ENCODE measurements at regions of chr6 and their contacts with region 1.

Region 1: DNA sequence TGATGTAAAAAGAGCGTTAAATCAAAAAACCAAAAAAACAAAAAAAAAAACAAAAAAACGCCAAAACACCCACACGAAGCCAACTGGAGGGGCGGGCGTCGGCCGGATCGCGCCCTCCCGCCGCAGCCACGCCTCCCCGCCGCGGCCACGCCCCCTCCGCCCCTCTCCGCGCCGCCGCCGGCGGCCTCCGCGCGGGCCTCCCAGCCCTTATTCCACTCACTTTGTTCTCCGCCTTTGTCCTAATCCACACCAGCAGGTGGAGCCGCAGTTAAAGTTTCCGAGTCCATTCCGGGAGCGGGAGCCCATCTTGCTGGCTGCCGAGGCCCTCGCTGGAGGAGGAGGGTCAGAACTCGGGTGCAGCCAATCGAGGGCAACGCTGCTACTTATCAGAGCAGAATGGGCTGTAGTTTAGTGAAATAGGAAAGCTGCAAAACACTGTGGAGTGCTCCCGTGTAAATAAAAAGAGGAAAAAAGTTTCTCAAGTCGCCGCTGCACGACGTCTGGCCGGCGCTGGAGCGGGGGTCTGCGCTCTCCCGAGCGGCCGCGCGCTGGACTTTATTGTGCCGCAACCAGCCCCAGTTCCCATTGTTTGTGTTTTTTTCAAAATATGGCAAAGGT is at the start of gene ASF1A:
- DNase-seq: peak; percentile 97
- H3K4me3 Mint-ChIP-seq: peak within 1 kb of the TSS; percentile 79
- H3K27ac Mint-ChIP-seq: peak within 1 kb of the TSS; percentile 95
- H3K4me1 Mint-ChIP-seq: peaks cover 51% of the 10 kb centered on the region
- H3K27me3 Mint-ChIP-seq: no peaks in the 10 kb centered on the region
- total RNA-seq, gene ASF1A: 55.7 to 59.8 TPM

Region 2: DNA sequence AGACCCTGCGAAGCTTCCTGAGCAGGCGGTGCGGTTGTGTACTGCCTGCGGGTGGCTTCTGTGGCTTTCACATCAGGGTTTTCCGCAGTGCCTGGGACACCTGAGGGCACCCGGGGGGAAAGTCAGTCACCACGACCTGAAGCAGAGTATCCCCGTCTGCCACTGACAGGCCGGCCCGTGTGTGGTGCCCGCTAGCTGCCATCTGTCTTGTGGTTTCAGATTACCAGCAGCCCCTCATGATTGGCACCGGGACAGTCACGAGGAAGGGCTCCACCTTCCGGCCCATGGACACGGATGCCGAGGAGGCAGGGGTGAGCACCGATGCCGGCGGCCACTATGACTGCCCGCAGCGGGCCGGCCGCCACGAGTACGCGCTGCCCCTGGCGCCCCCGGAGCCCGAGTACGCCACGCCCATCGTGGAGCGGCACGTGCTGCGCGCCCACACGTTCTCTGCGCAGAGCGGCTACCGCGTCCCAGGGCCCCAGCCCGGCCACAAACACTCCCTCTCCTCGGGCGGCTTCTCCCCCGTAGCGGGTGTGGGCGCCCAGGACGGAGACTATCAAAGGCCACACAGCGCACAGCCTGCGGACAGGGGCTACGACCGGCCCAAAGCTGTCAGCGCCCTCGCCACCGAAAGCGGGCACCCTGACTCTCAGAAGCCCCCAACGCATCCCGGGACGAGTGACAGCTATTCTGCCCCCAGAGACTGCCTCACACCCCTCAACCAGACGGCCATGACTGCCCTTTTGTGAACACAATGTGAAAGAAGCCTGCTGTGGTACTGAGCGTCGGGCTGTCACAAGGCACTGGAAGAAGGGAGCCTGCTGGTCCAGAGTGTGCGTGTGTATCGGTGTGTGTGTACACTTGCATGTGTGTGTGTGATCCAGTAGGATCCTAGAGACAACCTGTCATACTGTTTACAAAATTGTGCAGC is 1346.0 kb before region 1 on chr6:
- CTCF ChIA-PET with region 1: no interaction called
- POLR2A ChIA-PET with region 1: interaction called, 10 read pairs
- DNase-seq: peak; percentile 58
- H3K4me3 Mint-ChIP-seq: peak overlapping the region; percentile 75
- H3K27ac Mint-ChIP-seq: peak overlapping the region; percentile 94
- H3K4me1 Mint-ChIP-seq: peaks cover 44% of the 10 kb centered on the region
- H3K27me3 Mint-ChIP-seq: no peaks in the 10 kb centered on the region

Region 3: GRCh38 chr6:118800394-118801071 is 93.4 kb before region 1 on chr6:
- CTCF ChIA-PET with region 1: interaction called, 18 read pairs
- POLR2A ChIA-PET with region 1: interaction called, 20 read pairs
- DNase-seq: peak; percentile 87
- H3K4me3 Mint-ChIP-seq: peak overlapping the region; percentile 14
- H3K27ac Mint-ChIP-seq: peak overlapping the region; percentile 77
- H3K4me1 Mint-ChIP-seq: peaks cover 44% of the 10 kb centered on the region
- H3K27me3 Mint-ChIP-seq: no peaks in the 10 kb centered on the region

Region 4: GRCh38 chr6:118843685-118844390 is 50.1 kb before region 1 on chr6:
- CTCF ChIA-PET with region 1: interaction called, 15 read pairs
- POLR2A ChIA-PET with region 1: interaction called, 36 read pairs
- DNase-seq: no peak
- H3K4me3 Mint-ChIP-seq: no peak overlapping the region
- H3K27ac Mint-ChIP-seq: peak overlapping the region; percentile 37
- H3K4me1 Mint-ChIP-seq: peaks cover 25% of the 10 kb centered on the region
- H3K27me3 Mint-ChIP-seq: no peaks in the 10 kb centered on the region

Region 5: DNA sequence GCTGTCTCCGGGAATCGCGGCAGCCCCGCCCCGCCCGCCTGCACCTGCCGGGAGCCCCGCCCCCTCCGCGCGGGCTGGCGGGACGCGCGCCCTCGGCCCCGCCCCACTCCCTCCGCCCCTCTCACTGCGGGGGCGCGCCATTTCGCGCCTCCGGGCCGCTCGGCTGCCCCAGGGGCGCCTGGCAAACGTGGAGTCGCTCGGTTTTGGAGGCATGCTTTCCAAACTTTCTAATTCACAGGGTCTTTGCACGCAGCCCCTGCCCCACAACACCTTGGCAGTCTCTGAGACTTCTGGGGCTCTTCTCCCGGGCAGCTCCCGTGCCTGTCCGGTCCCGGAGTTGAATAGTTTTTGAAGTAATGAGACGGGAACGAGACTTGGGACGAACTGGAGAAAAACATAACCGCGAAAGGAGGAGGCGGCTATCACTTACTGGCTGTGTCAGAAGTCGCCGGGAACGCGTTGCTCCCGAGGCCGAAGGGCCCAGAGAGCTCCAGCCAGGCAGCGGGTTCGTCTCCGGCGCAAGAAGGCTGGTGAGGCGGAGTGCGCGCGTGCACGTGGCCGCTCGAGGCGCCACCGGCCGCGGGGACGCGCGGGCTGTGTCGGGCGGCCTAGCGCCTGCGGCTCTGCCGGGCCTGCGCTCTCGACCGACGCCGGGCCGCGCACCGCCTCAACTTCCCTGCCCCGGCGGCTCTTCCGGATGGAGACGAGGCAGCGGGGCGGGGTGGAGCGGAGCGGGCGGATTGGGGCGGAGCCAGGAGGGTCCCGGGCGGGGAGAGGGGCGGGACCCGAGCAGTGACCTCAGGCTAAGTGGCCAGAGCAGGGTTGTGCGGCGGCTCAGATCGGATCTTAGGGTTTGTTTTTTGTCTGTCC is 40.8 kb after region 1 on chr6 and contains the start of gene MCM9:
- CTCF ChIA-PET with region 1: interaction called, 4 read pairs
- POLR2A ChIA-PET with region 1: interaction called, 73 read pairs
- DNase-seq: peak; percentile 89
- H3K4me3 Mint-ChIP-seq: peak within 1 kb of the TSS; percentile 81
- H3K27ac Mint-ChIP-seq: peak within 1 kb of the TSS; percentile 85
- H3K4me1 Mint-ChIP-seq: peaks cover 28% of the 10 kb centered on the region
- H3K27me3 Mint-ChIP-seq: no peaks in the 10 kb centered on the region
- total RNA-seq, gene MCM9: 14.8 to 15.7 TPM

Region 6: GRCh38 chr6:119110601-119111548 is 217.0 kb after region 1 on chr6:
- CTCF ChIA-PET with region 1: interaction called, 11 read pairs
- POLR2A ChIA-PET with region 1: interaction called, 3 read pairs
- DNase-seq: peak; percentile 32
- H3K4me3 Mint-ChIP-seq: no peak overlapping the region
- H3K27ac Mint-ChIP-seq: no peak overlapping the region
- H3K4me1 Mint-ChIP-seq: peaks cover 14% of the 10 kb centered on the region
- H3K27me3 Mint-ChIP-seq: peaks cover 12% of the 10 kb centered on the region

Region 7: DNA sequence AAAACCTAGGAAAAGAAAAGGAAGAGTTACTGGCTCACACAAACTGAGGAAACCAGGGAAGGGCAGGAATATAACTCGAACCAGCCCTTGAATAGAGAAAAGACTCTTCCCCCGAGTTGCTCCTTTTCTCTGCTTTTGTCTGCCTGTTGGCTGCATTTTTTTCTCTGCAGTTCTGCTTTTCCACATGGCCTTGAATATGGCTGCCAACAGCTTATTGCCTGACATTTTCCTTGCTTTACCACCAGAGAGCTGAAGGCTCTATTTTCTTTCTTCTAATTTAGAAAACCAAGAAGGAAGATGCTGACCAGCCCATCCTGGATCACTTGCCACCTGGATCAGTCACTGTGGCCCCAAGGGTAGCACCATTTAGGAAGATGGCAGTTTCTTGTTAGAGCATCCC is 620.4 kb after region 1 on chr6:
- CTCF ChIA-PET with region 1: no interaction called
- POLR2A ChIA-PET with region 1: no interaction called
- DNase-seq: no peak
- H3K4me3 Mint-ChIP-seq: no peak overlapping the region
- H3K27ac Mint-ChIP-seq: no peak overlapping the region
- H3K4me1 Mint-ChIP-seq: no peaks in the 10 kb centered on the region
- H3K27me3 Mint-ChIP-seq: peaks cover 10% of the 10 kb centered on the region

Measured in activated CD4-positive, alpha-beta memory T cell treated with anti-CD3 and anti-CD28 coated beads, Interleukin-2, amount 10 ng/mL, durations not matched to agents 7 days and 5 days (primary cell).